Lower leg skin (tissue), 4 donors: ENCODE measurements at regions of chr4 and their contacts with region 1.

Region 1: DNA sequence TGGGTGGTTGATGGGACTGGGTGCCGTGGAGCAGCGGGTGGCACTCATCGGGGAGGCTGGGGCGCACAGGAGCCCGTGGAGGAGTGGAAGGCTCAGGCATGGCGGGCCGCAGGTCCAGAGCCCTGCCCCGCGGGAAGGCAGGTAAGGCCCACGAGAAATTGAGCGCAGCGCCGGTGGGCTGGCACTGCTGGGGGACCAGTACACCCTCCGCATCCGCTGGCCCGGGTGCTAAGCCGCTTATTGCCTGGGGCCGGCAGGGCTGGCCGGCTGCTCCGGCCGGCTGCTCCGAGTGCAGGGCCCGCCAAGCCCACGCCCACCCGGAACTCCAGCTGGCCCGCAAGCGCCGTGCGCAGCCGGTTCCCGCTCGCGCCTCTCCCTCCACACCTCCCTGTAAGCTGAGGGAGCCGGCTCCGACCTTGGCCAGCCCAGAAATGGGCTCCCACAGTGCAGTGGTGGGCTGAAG is 85.1 kb upstream of the FAT4 start:
- DNase-seq: no peak
- H3K4me3 ChIP-seq: no peak overlapping the region
- CTCF ChIP-seq: no peak
- POLR2A ChIP-seq: no peak

Region 2: DNA sequence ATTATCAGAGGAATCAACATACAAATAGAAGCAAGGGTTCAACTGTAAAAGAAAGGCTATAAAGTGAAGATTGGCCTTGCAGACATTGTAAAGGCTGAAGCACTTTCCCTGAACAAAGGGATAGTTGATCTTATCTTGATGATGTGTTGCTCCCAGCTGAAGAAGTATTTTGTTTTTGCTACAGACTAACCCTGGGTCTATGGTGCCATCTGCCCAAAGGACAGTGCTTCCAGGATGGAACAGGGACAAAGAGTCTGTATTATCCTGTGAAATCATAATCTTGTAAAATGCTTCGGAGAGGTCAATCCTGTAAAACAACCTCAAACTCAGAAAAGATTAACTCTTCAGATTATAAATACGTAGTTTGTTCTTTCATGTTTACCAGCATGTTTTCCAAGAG is 265.4 kb before region 1 on chr4:
- intact Hi-C with region 1: loop called (anchors 5 kb)
- DNase-seq: no peak
- H3K4me3 ChIP-seq: no peak overlapping the region
- CTCF ChIP-seq: no peak
- POLR2A ChIP-seq: no peak